ENCODE measurements at regions of chr4 and their contacts with region 1.

Region 1: DNA sequence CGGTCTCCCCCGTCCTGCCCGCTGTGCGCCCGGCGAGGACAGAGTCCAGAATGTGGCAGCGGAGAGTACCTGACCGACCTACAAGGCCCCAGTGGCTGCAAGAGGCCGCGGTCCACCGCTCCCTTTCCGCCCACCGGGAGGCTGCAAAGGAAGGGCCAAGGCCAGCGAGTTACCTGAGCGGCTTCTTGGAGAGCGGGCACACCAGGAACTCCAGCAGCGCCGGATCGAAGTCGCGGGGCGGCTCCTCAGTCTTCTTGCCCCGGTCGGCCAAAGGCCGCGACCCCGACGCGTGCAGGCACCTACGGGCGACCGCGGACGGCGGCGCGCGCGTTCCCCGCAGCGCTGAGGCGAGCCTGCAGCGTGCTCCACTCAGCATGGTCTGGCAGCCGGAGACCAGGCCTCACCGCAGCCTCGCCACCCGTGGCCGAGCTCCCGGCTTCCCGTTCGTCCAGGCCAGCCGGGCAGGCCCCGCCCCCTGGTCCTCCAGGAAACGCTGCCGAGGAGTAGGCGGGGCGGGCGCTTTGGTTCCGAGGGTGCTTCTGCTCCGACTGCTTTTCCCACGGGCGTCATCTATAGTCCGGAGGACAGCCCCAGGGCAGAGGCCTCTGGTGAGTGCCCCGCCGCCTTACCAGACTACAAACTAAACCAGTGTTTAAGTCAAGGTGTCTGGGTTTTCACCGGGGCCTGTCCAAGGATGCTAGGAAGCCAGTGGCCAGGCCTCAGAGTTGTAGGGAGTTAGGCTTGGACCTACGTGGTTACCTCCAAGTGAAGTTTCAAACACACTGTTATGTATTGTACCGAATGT is at the start of gene PYURF:
- DNase-seq: peak; percentile 99
- H3K4me3 ChIP-seq: peak within 1 kb of the TSS; percentile 86
- H3K27ac ChIP-seq: peak within 1 kb of the TSS; percentile 97
- H3K4me1 ChIP-seq: peaks cover 29% of the 10 kb centered on the region
- H3K27me3 ChIP-seq: no peaks in the 10 kb centered on the region
- total RNA-seq, gene PYURF: 93.8 and 118 TPM in 2 replicates

Region 2: DNA sequence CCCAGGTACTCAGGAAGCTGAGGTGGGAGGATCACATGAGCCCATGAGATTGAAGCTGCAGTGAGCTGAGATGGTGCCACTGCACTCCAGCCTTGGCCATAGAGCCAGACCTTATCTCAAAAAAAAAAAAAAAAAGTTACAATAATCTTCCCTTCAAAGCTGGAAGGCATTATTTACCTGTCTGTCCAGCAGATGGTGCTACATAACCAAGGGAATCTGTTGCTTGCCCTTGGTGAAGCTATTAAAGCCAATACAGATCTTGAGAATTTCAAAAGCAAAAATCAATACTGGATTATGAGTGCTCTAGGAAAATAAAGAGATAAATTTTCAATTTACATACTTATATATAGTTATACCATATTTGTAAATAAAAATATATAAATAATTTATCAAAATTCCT is 490.2 kb before region 1 on chr4:
- in situ Hi-C with region 1: loop called (anchors 25 kb)
- DNase-seq: peak; percentile 72
- H3K4me3 ChIP-seq: no peak overlapping the region
- H3K27ac ChIP-seq: no peak overlapping the region
- H3K4me1 ChIP-seq: peaks cover 18% of the 10 kb centered on the region
- H3K27me3 ChIP-seq: no peaks in the 10 kb centered on the region

Region 3: GRCh38 chr4:88823058-88823919 is 299.8 kb after region 1 on chr4:
- in situ Hi-C with region 1: loop called (anchors 25 kb)
- DNase-seq: peak; percentile 95
- H3K4me3 ChIP-seq: peak overlapping the region; percentile 92
- H3K27ac ChIP-seq: peak overlapping the region; percentile 98
- H3K4me1 ChIP-seq: peaks cover 25% of the 10 kb centered on the region
- H3K27me3 ChIP-seq: no peaks in the 10 kb centered on the region

Region 4: DNA sequence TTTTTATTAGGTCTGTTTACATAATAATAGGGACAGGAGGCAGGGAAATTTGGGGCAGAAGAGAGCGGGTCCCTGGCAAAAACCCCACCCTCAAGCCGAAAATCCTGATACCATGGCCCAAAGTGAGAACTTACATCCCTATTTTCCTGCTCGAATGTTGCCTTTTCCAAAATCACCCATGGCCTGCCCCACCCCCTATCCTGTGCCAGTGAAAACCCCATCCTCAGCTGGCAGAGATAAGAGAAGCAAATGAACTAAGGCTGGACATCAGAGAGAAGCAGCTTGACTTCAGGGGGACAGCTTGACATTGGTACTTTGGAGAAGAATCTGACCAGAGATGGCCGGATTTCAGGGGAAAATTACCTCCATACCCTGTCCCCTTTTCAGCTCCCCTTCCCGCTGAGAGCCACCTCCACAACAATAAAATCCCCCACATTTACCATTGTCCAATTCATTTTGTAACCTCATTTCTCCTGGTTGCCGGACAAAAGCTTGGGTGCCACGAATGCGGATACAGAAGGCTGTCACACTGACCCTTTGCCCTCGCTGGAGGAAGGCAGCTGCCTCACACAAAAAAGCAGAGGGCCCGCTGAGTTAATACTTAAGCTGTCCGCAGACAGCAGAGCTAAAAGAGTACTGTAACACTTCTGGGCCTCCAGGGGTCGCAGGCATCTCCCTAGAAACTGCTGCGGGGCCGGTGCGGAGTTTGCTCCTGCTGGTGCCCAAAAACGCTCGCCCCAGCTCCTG is 1117.3 kb after region 1 on chr4:
- in situ Hi-C with region 1: no loop called
- DNase-seq: peak; percentile 82
- H3K4me3 ChIP-seq: peak overlapping the region; percentile 61
- H3K27ac ChIP-seq: no peak overlapping the region
- H3K4me1 ChIP-seq: no peaks in the 10 kb centered on the region
- H3K27me3 ChIP-seq: peaks cover 11% of the 10 kb centered on the region; the same call in 1 of the 2 replicates

Measured in GM23248 (cell line).